Cardiac septum (tissue), 1 donor: ENCODE measurements at regions of chr11 and their contacts with region 1.

Region 1: DNA sequence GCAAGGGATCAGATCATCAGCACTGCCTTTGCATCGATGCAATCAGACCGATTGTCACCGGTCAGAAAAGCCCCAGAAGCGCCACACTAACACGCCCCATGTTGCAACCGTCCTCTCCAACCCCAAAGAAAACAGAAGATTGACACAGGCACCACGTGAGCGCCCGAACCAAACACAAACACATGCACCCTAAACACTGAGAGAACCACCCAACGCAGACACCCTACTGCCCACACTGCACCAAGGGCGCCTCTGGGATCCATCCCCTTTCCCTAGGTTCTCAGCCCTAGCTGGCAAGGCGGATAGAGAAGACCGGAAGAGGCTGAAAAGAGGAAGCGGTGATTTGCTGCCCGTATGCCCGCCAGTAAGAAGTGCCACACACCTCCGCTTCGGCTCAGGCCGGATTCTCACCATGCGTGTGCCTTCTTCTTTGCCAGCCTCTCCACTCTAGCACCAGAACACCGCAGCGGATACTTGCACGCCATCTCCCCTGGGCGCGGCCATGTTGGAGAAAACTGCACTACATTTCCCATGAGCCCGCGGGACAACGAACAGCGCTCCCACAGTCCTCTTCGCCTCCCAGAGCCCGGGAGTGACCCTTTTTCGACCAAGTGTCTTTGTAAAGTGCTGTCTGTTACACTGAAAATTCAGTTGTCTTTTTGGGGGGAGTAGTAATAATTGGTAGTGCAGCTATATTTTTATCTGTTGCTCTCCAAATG is at the start of gene ALKBH8:
- DNase-seq: peak; percentile 84
- total RNA-seq, gene ALKBH8: 6.2 TPM

Region 2: DNA sequence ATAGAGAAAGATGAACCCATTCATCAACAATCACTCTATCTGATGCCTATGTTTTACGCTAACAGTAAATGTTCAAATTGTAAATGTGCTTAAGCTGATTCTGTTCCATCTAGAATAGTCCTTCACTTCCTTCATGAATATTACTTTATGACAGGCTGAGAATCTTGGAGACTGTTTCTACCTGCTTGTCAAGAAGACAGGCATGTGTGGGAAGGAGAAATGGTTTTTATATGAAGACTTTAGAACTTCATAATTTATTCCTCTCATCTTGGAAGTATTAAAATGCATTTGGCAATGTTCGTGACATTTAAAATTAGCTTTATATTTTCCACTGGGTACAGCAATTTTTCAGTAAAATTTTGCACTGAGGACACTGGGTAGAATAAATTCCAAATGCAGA is 66.6 kb after region 1 on chr11:
- intact Hi-C with region 1: no loop called
- DNase-seq: no peak

Region 3: GRCh38 chr11:107689317-107690202 is 124.2 kb after region 1 on chr11:
- intact Hi-C with region 1: loop called (anchors 5 kb)
- DNase-seq: no peak

Region 4: GRCh38 chr11:107713009-107713408 is 147.6 kb after region 1 on chr11:
- intact Hi-C with region 1: no loop called
- DNase-seq: no peak